ENCODE measurements at regions of chr9 and their contacts with region 1.

Region 1: GRCh38 chr9:136283291-136284235 is 20.3 kb downstream of the CCDC187 start:
- DNase-seq: peak; percentile 58
- H3K4me3 Mint-ChIP-seq: no peak overlapping the region
- H3K27ac Mint-ChIP-seq: no peak overlapping the region
- H3K4me1 Mint-ChIP-seq: peaks cover 3% of the 10 kb centered on the region
- H3K27me3 Mint-ChIP-seq: no peaks in the 10 kb centered on the region

Region 2: GRCh38 chr9:136170006-136170901 is 113.3 kb before region 1 on chr9:
- intact Hi-C with region 1: loop called (anchors 1 kb)
- DNase-seq: peak; percentile 32
- H3K4me3 Mint-ChIP-seq: no peak overlapping the region
- H3K27ac Mint-ChIP-seq: no peak overlapping the region
- H3K4me1 Mint-ChIP-seq: no peaks in the 10 kb centered on the region
- H3K27me3 Mint-ChIP-seq: no peaks in the 10 kb centered on the region

Region 3: DNA sequence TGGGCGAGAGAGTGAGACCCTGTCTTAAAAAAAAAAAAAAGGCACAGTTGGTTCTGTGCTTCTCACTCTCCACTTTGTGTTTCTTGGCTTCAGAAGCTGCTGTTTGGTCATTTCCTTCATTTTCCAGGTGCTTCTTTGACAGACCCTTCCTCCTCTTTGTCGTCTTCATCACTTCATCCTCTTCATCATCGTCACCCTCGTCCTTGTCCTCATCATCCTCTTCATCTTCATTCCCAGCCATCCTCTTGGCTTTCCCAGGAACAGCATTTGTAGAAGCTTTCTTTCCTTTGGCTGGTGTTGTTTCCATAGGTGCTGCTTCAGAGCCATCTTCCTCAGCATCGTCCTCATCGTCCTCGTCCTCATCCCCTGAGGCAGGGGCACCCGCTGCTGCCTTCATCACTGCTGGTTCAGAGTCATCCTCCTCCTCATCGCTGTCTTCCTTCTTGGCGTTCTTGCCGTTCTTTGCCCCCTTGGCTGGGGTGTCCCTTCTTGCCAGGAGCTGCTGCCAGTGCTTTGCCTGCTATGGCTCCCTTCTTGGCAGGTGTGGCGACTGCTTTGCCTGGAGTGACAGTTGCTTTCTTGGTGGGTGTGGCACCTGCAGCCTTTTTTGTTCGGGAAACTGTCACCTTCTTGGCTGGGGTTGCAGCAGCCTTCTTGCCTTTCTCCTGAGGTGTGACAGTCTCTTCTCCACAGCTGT is 531.3 kb after region 1 on chr9:
- intact Hi-C with region 1: no loop called
- DNase-seq: no peak
- H3K4me3 Mint-ChIP-seq: no peak overlapping the region
- H3K27ac Mint-ChIP-seq: no peak overlapping the region
- H3K4me1 Mint-ChIP-seq: peaks cover 27% of the 10 kb centered on the region
- H3K27me3 Mint-ChIP-seq: no peaks in the 10 kb centered on the region

Measured in activated T-helper 2 cell treated with anti-CD3 and anti-CD28 coated beads, Interferon-gamma antibody, Interleukin-2, Interleukin-4, amounts not matched to agents 10 μg/mL and 5 μg/mL and 100 μg/mL, durations not matched to agents 14 hours and 24 hours and 36 hours (primary cell).